ENCODE measurements at regions of chr16 and their contacts with region 1.

Region 1: GRCh38 chr16:19086322-19087199 is 19.1 kb downstream of the COQ7 start:
- DNase-seq: peak; percentile 82
- ATAC-seq: peak; percentile 97
- H3K4me3 Mint-ChIP-seq: peak overlapping the region; percentile 63
- H3K27ac Mint-ChIP-seq: no peak overlapping the region
- H3K4me1 Mint-ChIP-seq: peaks cover 5% of the 10 kb centered on the region
- H3K27me3 Mint-ChIP-seq: peaks cover 2% of the 10 kb centered on the region
- CTCF ChIP-seq: peak; percentile 91

Region 2: DNA sequence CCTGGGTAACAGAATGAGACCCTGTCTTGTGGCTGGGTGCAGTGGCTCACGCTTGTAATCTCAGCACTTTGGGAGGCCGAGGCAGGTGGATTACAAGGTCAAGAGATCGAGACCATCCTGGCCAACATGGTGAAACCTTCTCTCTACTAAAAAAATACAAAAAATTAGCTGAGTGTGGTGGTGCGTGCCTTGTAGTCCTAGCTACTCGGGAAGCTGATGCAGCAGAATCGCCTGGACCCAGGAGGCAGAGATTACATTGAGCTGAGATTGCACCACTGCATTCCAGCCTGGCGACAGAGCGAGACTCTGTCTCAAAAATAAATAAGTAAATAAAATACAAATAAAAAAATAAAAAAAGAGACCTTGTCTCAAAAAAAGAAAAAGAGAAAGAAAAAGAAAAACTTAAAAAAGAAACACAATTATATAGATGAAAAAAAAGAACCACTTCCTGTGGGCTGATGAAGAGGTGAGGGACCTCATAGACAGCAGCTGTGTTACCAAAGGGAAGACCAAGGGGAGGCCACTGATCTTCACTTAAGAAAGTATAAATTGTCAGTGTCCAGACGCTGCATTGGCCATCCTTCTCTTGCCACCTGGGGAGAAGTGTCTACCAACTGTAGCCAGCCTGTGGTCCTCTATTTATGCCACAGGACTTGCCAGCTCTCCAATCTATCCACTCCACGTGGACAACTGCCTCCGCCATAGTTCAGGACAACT is 135.9 kb before region 1 on chr16:
- CTCF ChIA-PET with region 1: no interaction called
- POLR2A ChIA-PET with region 1: no interaction called
- intact Hi-C with region 1: no loop called
- DNase-seq: no peak
- ATAC-seq: no peak
- H3K4me3 Mint-ChIP-seq: no peak overlapping the region
- H3K27ac Mint-ChIP-seq: no peak overlapping the region
- H3K4me1 Mint-ChIP-seq: peaks cover 15% of the 10 kb centered on the region
- H3K27me3 Mint-ChIP-seq: peaks cover under 1% of the 10 kb centered on the region
- CTCF ChIP-seq: no peak

Region 3: GRCh38 chr16:19005561-19006445 is 80.8 kb before region 1 on chr16:
- CTCF ChIA-PET with region 1: no interaction called
- POLR2A ChIA-PET with region 1: no interaction called
- intact Hi-C with region 1: no loop called
- DNase-seq: no peak
- ATAC-seq: no peak
- H3K4me3 Mint-ChIP-seq: no peak overlapping the region
- H3K27ac Mint-ChIP-seq: no peak overlapping the region
- H3K4me1 Mint-ChIP-seq: no peaks in the 10 kb centered on the region
- H3K27me3 Mint-ChIP-seq: peaks cover 3% of the 10 kb centered on the region
- CTCF ChIP-seq: no peak

Region 4: GRCh38 chr16:19179546-19180490 is 93.3 kb after region 1 on chr16:
- CTCF ChIA-PET with region 1: interaction called, 29 read pairs
- POLR2A ChIA-PET with region 1: interaction called, 3 read pairs
- intact Hi-C with region 1: loop called (anchors 2 kb)
- DNase-seq: peak; percentile 29
- ATAC-seq: peak; percentile 72
- H3K4me3 Mint-ChIP-seq: no peak overlapping the region
- H3K27ac Mint-ChIP-seq: no peak overlapping the region
- H3K4me1 Mint-ChIP-seq: peaks cover 13% of the 10 kb centered on the region
- H3K27me3 Mint-ChIP-seq: no peaks in the 10 kb centered on the region
- CTCF ChIP-seq: no peak

Region 5: GRCh38 chr16:19294156-19294649 is 207.6 kb after region 1 on chr16:
- CTCF ChIA-PET with region 1: no interaction called
- POLR2A ChIA-PET with region 1: no interaction called
- intact Hi-C with region 1: loop called (anchors 10 kb)
- DNase-seq: peak; percentile 18
- ATAC-seq: peak; percentile 88
- H3K4me3 Mint-ChIP-seq: peak overlapping the region; percentile 42
- H3K27ac Mint-ChIP-seq: peak overlapping the region; percentile 84
- H3K4me1 Mint-ChIP-seq: peaks cover 29% of the 10 kb centered on the region
- H3K27me3 Mint-ChIP-seq: peaks cover 7% of the 10 kb centered on the region
- CTCF ChIP-seq: no peak

Region 6: GRCh38 chr16:19502395-19503131 is 416.0 kb after region 1 on chr16:
- CTCF ChIA-PET with region 1: interaction called, 69 read pairs
- POLR2A ChIA-PET with region 1: no interaction called
- intact Hi-C with region 1: loop called (anchors 1 kb)
- DNase-seq: peak; percentile 34
- ATAC-seq: peak; percentile 56
- H3K4me3 Mint-ChIP-seq: no peak overlapping the region
- H3K27ac Mint-ChIP-seq: no peak overlapping the region
- H3K4me1 Mint-ChIP-seq: no peaks in the 10 kb centered on the region
- H3K27me3 Mint-ChIP-seq: no peaks in the 10 kb centered on the region
- CTCF ChIP-seq: peak; percentile 51